ENCODE measurements at regions of chr7 and their contacts with region 1.

Region 1: GRCh38 chr7:29105752-29106668 is 40.3 kb downstream of the CPVL start:
- DNase-seq: no peak
- H3K4me3 Mint-ChIP-seq: no peak overlapping the region
- H3K27ac Mint-ChIP-seq: no peak overlapping the region
- H3K4me1 Mint-ChIP-seq: no peaks in the 10 kb centered on the region
- H3K27me3 Mint-ChIP-seq: peaks cover 7% of the 10 kb centered on the region

Region 2: GRCh38 chr7:28921822-28922221 is 184.2 kb before region 1 on chr7:
- intact Hi-C with region 1: loop called (anchors 1 kb)
- DNase-seq: no peak
- H3K4me3 Mint-ChIP-seq: no peak overlapping the region
- H3K27ac Mint-ChIP-seq: no peak overlapping the region
- H3K4me1 Mint-ChIP-seq: peaks cover 3% of the 10 kb centered on the region
- H3K27me3 Mint-ChIP-seq: peaks cover 24% of the 10 kb centered on the region

Region 3: GRCh38 chr7:28926871-28927597 is 179.0 kb before region 1 on chr7:
- intact Hi-C with region 1: loop called (anchors 1 kb)
- DNase-seq: peak; percentile 46
- H3K4me3 Mint-ChIP-seq: peak overlapping the region; percentile 70
- H3K27ac Mint-ChIP-seq: no peak overlapping the region
- H3K4me1 Mint-ChIP-seq: peaks cover 5% of the 10 kb centered on the region
- H3K27me3 Mint-ChIP-seq: peaks cover 26% of the 10 kb centered on the region